Naive thymus-derived CD4-positive, alpha-beta T cell (primary cell): ENCODE measurements at regions of chr1 and their contacts with region 1.

Region 1: DNA sequence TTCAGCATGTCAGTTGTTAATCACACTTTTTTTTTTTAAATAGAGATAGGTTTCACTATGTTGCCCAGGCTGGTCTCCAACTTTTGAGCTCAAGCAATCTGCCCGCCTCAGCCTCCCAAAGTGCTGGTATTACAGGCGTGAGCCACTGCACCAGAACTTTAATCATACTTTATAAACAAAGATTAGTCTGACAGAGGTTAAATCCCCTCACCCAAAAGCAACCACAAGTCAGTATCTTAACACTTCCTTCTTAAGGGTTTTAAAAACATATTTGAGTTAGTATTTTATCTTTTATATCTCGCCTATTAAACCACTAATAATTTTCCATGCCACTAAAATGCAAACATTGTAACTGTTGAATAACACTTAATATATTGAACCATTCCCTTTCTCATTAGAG is 70.2 kb downstream of the COP1 start:
- DNase-seq: no peak
- ATAC-seq: no peak
- H3K4me3 ChIP-seq: no peak overlapping the region
- H3K4me3 Mint-ChIP-seq: no peak overlapping the region
- H3K27ac ChIP-seq: no peak overlapping the region
- H3K27ac Mint-ChIP-seq: peak overlapping the region in 5 of 9 donors; percentile 7 to 63 (median 36)
- H3K4me1 ChIP-seq: peaks cover 0 to 4% of the 10 kb centered on the region in 2 donors
- H3K4me1 Mint-ChIP-seq: peaks cover 2 to 48% (median 40%) of the 10 kb centered on the region in 7 donors
- H3K27me3 ChIP-seq: no peaks in the 10 kb centered on the region
- H3K27me3 Mint-ChIP-seq: no peaks in the 10 kb centered on the region

Region 2: GRCh38 chr1:175887981-175888433 is 248.9 kb before region 1 on chr1:
- CTCF ChIA-PET with region 1: no interaction called
- POLR2A ChIA-PET with region 1: no interaction called
- intact Hi-C with region 1: no loop called
- DNase-seq: peak in 2 of 9 donors; percentile 2
- ATAC-seq: peak; percentile 39
- H3K4me3 ChIP-seq: no peak overlapping the region
- H3K4me3 Mint-ChIP-seq: no peak overlapping the region
- H3K27ac ChIP-seq: no peak overlapping the region
- H3K27ac Mint-ChIP-seq: no peak overlapping the region
- H3K4me1 ChIP-seq: no peaks in the 10 kb centered on the region
- H3K4me1 Mint-ChIP-seq: peaks cover 0 to 6% (median 0%) of the 10 kb centered on the region in 7 donors
- H3K27me3 ChIP-seq: no peaks in the 10 kb centered on the region
- H3K27me3 Mint-ChIP-seq: peaks cover 0 to 10% (median 6%) of the 10 kb centered on the region in 5 donors

Region 3: GRCh38 chr1:176119549-176119948 is 17.3 kb before region 1 on chr1:
- CTCF ChIA-PET with region 1: interaction called, 3 read pairs
- POLR2A ChIA-PET with region 1: interaction called, 3 read pairs
- intact Hi-C with region 1: loop called in 1 of 2 experiments (anchors 2 kb)
- DNase-seq: no peak
- ATAC-seq: no peak
- H3K4me3 ChIP-seq: no peak overlapping the region
- H3K4me3 Mint-ChIP-seq: no peak overlapping the region
- H3K27ac ChIP-seq: no peak overlapping the region
- H3K27ac Mint-ChIP-seq: no peak overlapping the region
- H3K4me1 ChIP-seq: no peaks in the 10 kb centered on the region
- H3K4me1 Mint-ChIP-seq: peaks cover 0 to 8% (median 0%) of the 10 kb centered on the region in 7 donors
- H3K27me3 ChIP-seq: no peaks in the 10 kb centered on the region
- H3K27me3 Mint-ChIP-seq: no peaks in the 10 kb centered on the region